Spleen (tissue), 13 donors: ENCODE measurements at regions of chr6 and their contacts with region 1.

Region 1: DNA sequence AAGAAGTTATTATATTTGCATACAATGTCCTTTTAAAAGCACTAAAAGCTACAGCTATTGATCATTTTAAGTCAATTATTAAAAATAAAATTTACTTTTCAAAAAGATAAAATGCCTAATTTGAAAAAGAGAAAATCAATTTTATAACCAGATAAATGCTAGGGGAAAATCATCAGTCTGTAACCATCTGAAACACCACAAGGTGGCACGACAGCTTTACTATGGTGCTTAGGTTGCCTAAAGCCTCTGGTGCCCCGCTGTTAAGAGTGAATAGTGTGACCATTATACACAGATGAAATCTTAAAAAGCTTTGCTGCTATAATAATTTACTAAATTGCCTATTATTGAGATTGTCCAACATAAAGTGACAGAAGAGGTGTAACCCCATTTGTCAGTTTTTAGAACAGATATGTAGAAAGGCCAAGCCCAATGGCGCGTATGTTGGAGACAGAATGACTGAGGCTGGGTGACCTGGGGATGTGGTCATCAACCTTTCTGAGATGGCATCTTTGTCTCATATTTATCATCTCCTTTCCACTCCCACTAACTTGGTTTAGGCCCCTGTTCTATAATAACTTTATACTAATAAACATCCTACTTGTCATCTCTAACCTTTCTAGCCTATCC is 100.8 kb downstream of the MOXD1 start:
- DNase-seq: no peak
- H3K4me3 ChIP-seq: no peak overlapping the region
- H3K27ac ChIP-seq: no peak overlapping the region
- H3K4me1 ChIP-seq: no peaks in the 10 kb centered on the region
- H3K27me3 ChIP-seq: no peaks in the 10 kb centered on the region
- CTCF ChIP-seq: peak in 10 of 11 experiments; percentile 28 to 66 (median 50)
- POLR2A ChIP-seq: no peak

Region 2: GRCh38 chr6:132391391-132392271 is 91.2 kb after region 1 on chr6:
- intact Hi-C with region 1: loop called (anchors 10 kb)
- DNase-seq: no peak
- H3K4me3 ChIP-seq: no peak overlapping the region
- H3K27ac ChIP-seq: peak overlapping the region in 7 of 8 donors; percentile 17 to 53 (median 28)
- H3K4me1 ChIP-seq: peaks cover 0 to 6% (median 0%) of the 10 kb centered on the region in 6 donors
- H3K27me3 ChIP-seq: no peaks in the 10 kb centered on the region
- CTCF ChIP-seq: no peak
- POLR2A ChIP-seq: no peak

Region 3: GRCh38 chr6:132483779-132484679 is 183.6 kb after region 1 on chr6:
- intact Hi-C with region 1: loop called (anchors 5 kb)
- DNase-seq: no peak
- H3K4me3 ChIP-seq: no peak overlapping the region
- H3K27ac ChIP-seq: peak overlapping the region in 2 of 8 donors; percentile 14 to 54
- H3K4me1 ChIP-seq: peaks cover 16 to 89% (median 64%) of the 10 kb centered on the region in 6 donors
- H3K27me3 ChIP-seq: no peaks in the 10 kb centered on the region
- CTCF ChIP-seq: peak; percentile 32 to 77 (median 70)
- POLR2A ChIP-seq: no peak